ENCODE measurements at regions of chr9 and their contacts with region 1.

Region 1: GRCh38 chr9:71783120-71783530 is 14.8 kb upstream of the CEMIP2 start:
- DNase-seq: peak; percentile 94
- H3K4me3 Mint-ChIP-seq: peak overlapping the region; percentile 80
- H3K27ac Mint-ChIP-seq: peak overlapping the region; percentile 95
- H3K4me1 Mint-ChIP-seq: peaks cover 43% of the 10 kb centered on the region
- H3K27me3 Mint-ChIP-seq: no peaks in the 10 kb centered on the region

Region 2: GRCh38 chr9:71795097-71795813 is 12.1 kb after region 1 on chr9:
- intact Hi-C with region 1: loop called (anchors 1 kb)
- DNase-seq: peak; percentile 76
- H3K4me3 Mint-ChIP-seq: peak overlapping the region; percentile 74
- H3K27ac Mint-ChIP-seq: peak overlapping the region; percentile 85
- H3K4me1 Mint-ChIP-seq: peaks cover 32% of the 10 kb centered on the region
- H3K27me3 Mint-ChIP-seq: no peaks in the 10 kb centered on the region

Region 3: GRCh38 chr9:71819115-71819739 is 36.1 kb after region 1 on chr9:
- intact Hi-C with region 1: loop called (anchors 5 kb)
- DNase-seq: peak; percentile 77
- H3K4me3 Mint-ChIP-seq: no peak overlapping the region
- H3K27ac Mint-ChIP-seq: no peak overlapping the region
- H3K4me1 Mint-ChIP-seq: peaks cover 12% of the 10 kb centered on the region
- H3K27me3 Mint-ChIP-seq: peaks cover 2% of the 10 kb centered on the region

Region 4: GRCh38 chr9:71858812-71859211 is 75.7 kb after region 1 on chr9:
- intact Hi-C with region 1: loop called (anchors 5 kb)
- DNase-seq: peak; percentile 59
- H3K4me3 Mint-ChIP-seq: peak overlapping the region; percentile 8
- H3K27ac Mint-ChIP-seq: peak overlapping the region; percentile 38
- H3K4me1 Mint-ChIP-seq: peaks cover 19% of the 10 kb centered on the region
- H3K27me3 Mint-ChIP-seq: no peaks in the 10 kb centered on the region